ENCODE measurements at regions of chr3 and their contacts with region 1.

Region 1: GRCh38 chr3:66302288-66302687 is 81.5 kb downstream of the SLC25A26 start:
- DNase-seq: peak; percentile 37
- H3K4me3 Mint-ChIP-seq: peak overlapping the region; percentile 32
- H3K27ac Mint-ChIP-seq: peak overlapping the region; percentile 91
- H3K4me1 Mint-ChIP-seq: peaks cover 65% of the 10 kb centered on the region
- H3K27me3 Mint-ChIP-seq: no peaks in the 10 kb centered on the region

Region 2: DNA sequence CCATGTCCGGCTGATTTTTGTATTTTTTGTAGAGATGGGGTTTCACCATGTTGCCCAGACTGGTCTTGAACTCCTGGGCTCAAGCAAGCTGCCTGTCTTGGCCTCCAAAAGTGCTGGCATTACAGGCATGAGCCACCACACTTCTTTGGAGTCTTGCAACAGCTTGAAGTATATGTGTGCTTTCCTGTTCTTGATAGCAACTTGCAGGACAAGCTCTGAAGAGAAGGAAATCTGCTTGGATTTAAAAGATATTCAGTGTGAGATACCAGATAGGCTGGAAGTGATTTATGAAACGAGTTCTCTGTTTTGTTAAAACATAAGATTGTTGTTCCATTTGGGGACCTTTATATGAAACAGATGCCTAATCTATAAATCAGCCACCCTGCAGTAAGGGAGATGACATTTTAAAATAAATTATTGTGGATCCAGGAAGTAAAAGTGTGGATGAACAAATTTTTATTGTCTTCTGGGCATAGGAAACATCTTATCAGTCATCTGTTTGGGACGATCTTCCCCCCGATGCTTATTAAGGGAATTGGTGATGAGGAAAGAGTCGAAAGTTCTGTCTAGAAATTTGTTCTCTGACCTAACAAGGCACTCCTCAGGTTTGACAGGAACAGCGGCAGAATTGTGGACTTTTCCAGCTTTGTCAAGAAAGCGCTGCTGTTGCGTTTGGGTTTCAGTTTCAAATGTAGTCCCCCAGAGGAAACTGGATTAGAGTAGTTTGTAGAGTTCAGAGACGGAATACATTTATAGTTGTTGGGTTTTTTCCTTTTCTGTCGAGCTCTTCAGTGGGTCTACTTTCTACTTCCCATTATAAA is 209.9 kb before region 1 on chr3:
- intact Hi-C with region 1: no loop called
- DNase-seq: no peak
- H3K4me3 Mint-ChIP-seq: no peak overlapping the region
- H3K27ac Mint-ChIP-seq: no peak overlapping the region
- H3K4me1 Mint-ChIP-seq: no peaks in the 10 kb centered on the region
- H3K27me3 Mint-ChIP-seq: no peaks in the 10 kb centered on the region

Region 3: GRCh38 chr3:66239513-66240123 is 62.7 kb before region 1 on chr3:
- intact Hi-C with region 1: loop called (anchors 1 kb)
- DNase-seq: no peak
- H3K4me3 Mint-ChIP-seq: peak overlapping the region; percentile 15
- H3K27ac Mint-ChIP-seq: peak overlapping the region; percentile 87
- H3K4me1 Mint-ChIP-seq: peaks cover 31% of the 10 kb centered on the region
- H3K27me3 Mint-ChIP-seq: peaks cover 1% of the 10 kb centered on the region

Region 4: DNA sequence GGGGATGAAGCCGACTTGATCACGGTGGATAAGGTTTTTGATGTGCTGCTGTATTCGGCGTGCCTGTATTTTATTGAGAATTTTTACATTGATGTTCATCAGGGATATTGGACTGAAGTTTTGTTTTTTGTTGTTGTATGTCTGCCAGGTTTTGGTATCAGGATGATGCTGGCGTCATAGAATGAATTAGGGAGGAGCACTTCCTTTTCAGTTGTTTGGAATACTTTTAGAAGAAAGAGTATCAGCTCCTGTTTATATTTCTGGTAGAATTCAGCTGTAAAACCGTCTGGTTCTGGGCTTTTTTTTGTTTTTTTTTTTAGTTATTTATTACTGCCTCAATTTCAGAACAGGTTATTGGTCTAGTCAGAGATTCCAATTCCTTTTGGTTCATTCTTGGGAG is 12.2 kb after region 1 on chr3:
- intact Hi-C with region 1: loop called (anchors 2 kb)
- DNase-seq: no peak
- H3K4me3 Mint-ChIP-seq: no peak overlapping the region
- H3K27ac Mint-ChIP-seq: no peak overlapping the region
- H3K4me1 Mint-ChIP-seq: peaks cover 14% of the 10 kb centered on the region
- H3K27me3 Mint-ChIP-seq: no peaks in the 10 kb centered on the region

Region 5: GRCh38 chr3:66320390-66320789 is 18.1 kb after region 1 on chr3:
- intact Hi-C with region 1: loop called (anchors 2 kb)
- DNase-seq: no peak
- H3K4me3 Mint-ChIP-seq: no peak overlapping the region
- H3K27ac Mint-ChIP-seq: peak overlapping the region; percentile 14
- H3K4me1 Mint-ChIP-seq: peaks cover 17% of the 10 kb centered on the region
- H3K27me3 Mint-ChIP-seq: no peaks in the 10 kb centered on the region

Measured in activated T-helper 1 cell treated with anti-CD3 and anti-CD28 coated beads, Interleukin-12 subunit alpha, Interleukin-12 subunit beta, Interleukin-2, Interleukin-4 antibody, amounts not matched to agents 30 ng/mL and 10 ng/mL and 1 ng/mL, durations not matched to agents 14 hours and 24 hours and 36 hours (primary cell).